Prostate gland (tissue), 2 donors: ENCODE measurements at regions of chr17 and their contacts with region 1.

Region 1: GRCh38 chr17:27535036-27535928 is 79.0 kb downstream of the KSR1 start:
- DNase-seq: no peak
- H3K4me3 ChIP-seq: no peak overlapping the region
- H3K27ac ChIP-seq: no peak overlapping the region
- H3K4me1 ChIP-seq: no peaks in the 10 kb centered on the region
- H3K27me3 ChIP-seq: no peaks in the 10 kb centered on the region
- CTCF ChIP-seq: no peak
- POLR2A ChIP-seq: no peak

Region 2: DNA sequence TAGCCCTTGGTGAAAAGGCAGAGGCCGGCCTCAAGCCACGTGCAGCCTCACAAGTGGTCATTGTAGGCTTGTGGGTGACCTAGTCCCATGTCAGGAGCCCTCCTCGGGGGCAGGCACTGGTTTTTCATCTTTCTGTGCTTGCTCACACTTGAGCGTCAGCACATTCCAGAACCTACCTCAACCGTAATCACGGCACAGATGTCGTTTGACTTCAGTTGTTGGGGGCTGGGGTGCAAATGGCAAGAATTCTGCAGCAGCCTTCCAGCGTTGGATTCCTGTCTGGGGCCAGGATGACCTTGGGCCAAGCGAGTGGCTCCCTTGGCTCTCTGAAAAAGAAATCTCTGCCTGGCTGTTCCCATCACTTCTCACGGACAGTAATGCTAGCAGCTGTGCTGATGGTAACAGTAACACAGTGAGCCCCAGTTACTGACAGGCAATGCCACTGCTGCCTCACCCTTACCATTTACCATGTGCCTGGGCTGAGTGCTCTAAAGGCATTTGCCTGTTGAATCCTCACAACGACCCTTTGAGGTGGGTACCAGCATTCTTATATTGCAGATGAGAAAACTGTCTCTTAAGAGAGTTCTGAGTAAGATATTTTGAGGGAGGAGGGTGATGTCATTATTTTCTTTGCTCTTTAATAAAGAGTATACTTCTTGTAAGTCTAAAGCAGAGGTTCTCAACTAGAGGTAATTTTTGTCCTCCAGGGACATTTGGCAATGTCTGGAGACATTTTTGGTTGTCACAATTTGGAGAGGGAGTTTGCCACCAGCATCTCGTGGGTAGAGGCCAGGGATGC is 32.6 kb before region 1 on chr17:
- intact Hi-C with region 1: loop called (anchors 5 kb)
- DNase-seq: no peak
- H3K4me3 ChIP-seq: no peak overlapping the region
- H3K27ac ChIP-seq: no peak overlapping the region
- H3K4me1 ChIP-seq: no peaks in the 10 kb centered on the region
- H3K27me3 ChIP-seq: no peaks in the 10 kb centered on the region
- CTCF ChIP-seq: no peak
- POLR2A ChIP-seq: no peak

Region 3: DNA sequence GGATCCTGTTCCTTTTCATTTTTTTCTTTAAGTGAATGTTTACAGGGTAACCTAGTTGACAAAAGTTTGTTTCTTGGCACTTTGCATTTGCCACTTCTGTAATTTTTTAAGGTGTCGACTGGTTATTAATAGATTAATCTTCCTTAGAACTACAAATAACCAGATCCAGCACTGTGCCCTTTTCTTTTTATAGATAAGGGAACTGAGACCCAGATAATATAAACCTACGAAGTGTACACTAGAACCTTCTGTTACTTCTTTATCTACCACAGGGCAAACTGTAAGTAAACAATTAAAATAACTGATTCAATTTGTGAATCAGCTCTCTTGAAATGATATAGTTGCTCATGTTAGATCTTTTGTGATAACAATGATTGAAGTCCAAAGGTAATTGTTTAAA is 562.6 kb after region 1 on chr17:
- intact Hi-C with region 1: no loop called
- DNase-seq: no peak
- H3K4me3 ChIP-seq: no peak overlapping the region
- H3K27ac ChIP-seq: no peak overlapping the region
- H3K4me1 ChIP-seq: no peaks in the 10 kb centered on the region
- H3K27me3 ChIP-seq: no peaks in the 10 kb centered on the region
- CTCF ChIP-seq: no peak
- POLR2A ChIP-seq: no peak